HEK293 (cell line): ENCODE measurements at regions of chr1 and their contacts with region 1.

Region 1: GRCh38 chr1:7572654-7573152 is 198.4 kb upstream of the VAMP3 start:
- H3K4me3 ChIP-seq: no peak overlapping the region
- H3K27ac ChIP-seq: no peak overlapping the region
- H3K4me1 ChIP-seq: no peaks in the 10 kb centered on the region
- CTCF ChIP-seq: no peak

Region 2: GRCh38 chr1:7561331-7561921 is 11.3 kb before region 1 on chr1:
- CTCF ChIA-PET with region 1: interaction called, 11 read pairs
- POLR2A ChIA-PET with region 1: no interaction called
- H3K4me3 ChIP-seq: no peak overlapping the region
- H3K27ac ChIP-seq: no peak overlapping the region
- H3K4me1 ChIP-seq: no peaks in the 10 kb centered on the region
- CTCF ChIP-seq: peak; percentile 70; the same call in 1 of the 2 replicates

Region 3: DNA sequence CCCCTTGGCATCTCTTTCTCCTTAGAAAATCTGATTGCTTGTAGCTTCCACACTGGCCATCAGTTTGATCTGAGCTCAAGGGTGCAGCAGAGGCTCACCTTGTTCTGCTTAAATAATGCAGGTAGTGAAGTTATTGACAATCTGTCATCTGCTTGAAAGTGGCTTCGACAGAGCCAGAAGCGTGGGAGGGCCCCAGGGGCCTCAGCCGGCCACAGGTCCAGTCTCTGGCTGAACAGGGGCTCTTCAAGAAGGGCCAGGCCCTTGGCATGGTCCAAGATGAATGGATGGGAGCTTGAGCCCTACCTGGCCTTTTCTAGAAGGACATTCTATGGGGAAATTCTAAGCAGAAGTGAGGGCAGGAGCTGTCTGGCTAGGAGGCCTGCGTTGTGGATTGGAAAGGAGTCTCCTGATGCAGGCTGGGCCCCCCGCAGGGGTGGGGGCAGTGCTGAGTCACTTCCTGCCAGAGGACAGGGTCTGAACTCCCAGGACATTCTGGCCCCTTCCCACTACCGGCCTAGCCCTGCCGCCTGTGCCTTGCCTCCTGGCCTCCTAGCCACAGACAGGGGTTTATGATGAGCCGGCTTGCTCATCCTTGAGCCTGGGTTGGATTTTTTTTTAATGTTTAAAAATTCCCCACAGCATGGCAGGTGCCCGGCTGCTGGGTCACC is 36.1 kb after region 1 on chr1:
- CTCF ChIA-PET with region 1: no interaction called
- POLR2A ChIA-PET with region 1: no interaction called
- H3K4me3 ChIP-seq: no peak overlapping the region
- H3K27ac ChIP-seq: no peak overlapping the region
- H3K4me1 ChIP-seq: no peaks in the 10 kb centered on the region
- CTCF ChIP-seq: no peak